Stomach (tissue), 19 donors: ENCODE measurements at regions of chr2 and their contacts with region 1.

Region 1: GRCh38 chr2:45484965-45485364 is 126.1 kb downstream of the SRBD1 start:
- DNase-seq: no peak
- H3K4me3 ChIP-seq: no peak overlapping the region
- H3K27ac ChIP-seq: no peak overlapping the region
- H3K4me1 ChIP-seq: no peaks in the 10 kb centered on the region
- H3K27me3 ChIP-seq: no peaks in the 10 kb centered on the region
- CTCF ChIP-seq: no peak
- EP300 ChIP-seq: no peak
- POLR2A ChIP-seq: no peak

Region 2: DNA sequence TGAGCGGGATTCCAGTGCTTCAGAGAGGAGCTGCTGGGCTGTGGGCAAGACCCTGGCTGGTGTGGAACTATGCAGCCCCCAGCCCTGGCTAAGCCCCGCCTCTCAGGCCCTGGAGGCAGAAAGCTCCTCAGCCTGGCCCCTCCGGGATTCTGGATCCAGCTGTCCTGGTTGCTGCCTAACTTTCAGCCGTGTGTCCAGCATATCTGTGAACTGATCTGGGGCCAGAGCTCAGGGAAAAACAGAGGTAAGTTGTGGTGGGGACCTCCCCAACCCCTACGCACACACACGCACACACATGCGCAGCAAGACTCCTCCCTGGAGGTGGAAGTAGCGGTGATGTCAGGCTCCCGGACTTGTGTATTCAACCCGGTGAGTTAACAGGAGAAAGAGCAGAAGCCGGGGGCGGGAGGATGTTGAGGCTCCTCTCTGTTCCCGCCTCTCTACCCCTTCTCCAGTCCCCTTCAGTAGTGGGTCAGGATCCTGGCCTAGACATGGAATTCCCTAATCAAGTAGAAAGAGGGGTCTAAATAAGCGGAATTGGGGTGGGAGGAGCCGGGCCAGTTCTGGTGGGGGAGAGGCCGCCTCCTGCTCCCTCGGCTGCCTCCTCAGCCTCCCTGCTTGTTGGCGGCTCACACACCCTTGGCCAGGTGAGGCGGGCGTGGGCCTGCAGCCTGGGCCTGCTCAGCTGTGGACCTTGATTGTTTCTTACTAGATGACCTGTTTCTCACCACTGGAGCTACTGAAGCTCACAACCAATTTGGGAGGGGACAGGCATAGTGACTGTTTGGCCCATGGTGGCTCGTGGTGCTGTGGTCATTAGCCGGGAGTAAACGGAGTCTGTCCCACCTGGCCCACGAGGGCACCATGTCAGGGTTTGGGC is 509.2 kb before region 1 on chr2:
- intact Hi-C with region 1: loop called (anchors 5 kb)
- DNase-seq: peak in 1 of 2 donors; percentile 53
- H3K4me3 ChIP-seq: no peak overlapping the region
- H3K27ac ChIP-seq: no peak overlapping the region
- H3K4me1 ChIP-seq: peaks cover 0 to 6% (median 0%) of the 10 kb centered on the region in 4 donors
- H3K27me3 ChIP-seq: peaks cover 3 to 74% (median 6%) of the 10 kb centered on the region in 3 donors
- CTCF ChIP-seq: no peak
- EP300 ChIP-seq: no peak
- POLR2A ChIP-seq: no peak

Region 3: DNA sequence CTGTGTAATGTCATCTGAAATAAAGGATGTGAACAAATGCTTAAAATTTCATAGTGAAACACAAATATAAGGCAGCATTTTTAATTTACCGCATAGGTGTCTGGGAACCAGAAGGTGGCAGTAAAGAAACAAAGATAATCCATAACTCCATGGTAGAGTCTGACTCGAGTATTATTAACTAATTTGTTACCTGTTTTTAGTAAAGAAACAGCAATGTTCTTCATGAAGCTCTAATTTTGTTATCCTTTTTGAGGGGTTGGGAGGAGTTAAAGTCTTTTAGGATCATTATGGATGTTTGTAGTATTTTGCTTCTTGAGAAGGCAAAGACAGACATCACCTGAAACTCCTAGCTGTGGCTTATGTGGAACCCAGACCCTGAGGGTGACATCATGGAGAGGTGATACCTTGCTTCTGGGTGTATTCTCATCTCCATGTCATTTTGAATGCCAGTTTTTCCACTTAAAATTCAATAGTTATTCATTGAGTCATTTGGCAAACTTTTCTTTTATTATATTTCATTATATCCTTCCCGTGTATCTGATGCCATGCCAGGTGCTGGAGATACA is 526.0 kb after region 1 on chr2:
- intact Hi-C with region 1: no loop called
- DNase-seq: peak in 1 of 2 donors; percentile 69
- H3K4me3 ChIP-seq: no peak overlapping the region
- H3K27ac ChIP-seq: peak overlapping the region in 2 of 5 donors; percentile 21 to 56
- H3K4me1 ChIP-seq: peaks cover 0 to 14% (median 6%) of the 10 kb centered on the region in 4 donors
- H3K27me3 ChIP-seq: no peaks in the 10 kb centered on the region
- CTCF ChIP-seq: peak in 5 of 7 experiments; percentile 37 to 79 (median 64)
- EP300 ChIP-seq: no peak
- POLR2A ChIP-seq: no peak

Region 4: GRCh38 chr2:46135958-46136357 is 651.0 kb after region 1 on chr2:
- intact Hi-C with region 1: no loop called
- DNase-seq: peak in 1 of 2 donors; percentile 52
- H3K4me3 ChIP-seq: no peak overlapping the region
- H3K27ac ChIP-seq: peak overlapping the region in 3 of 5 donors; percentile 11 to 22 (median 15)
- H3K4me1 ChIP-seq: peaks cover 0 to 35% (median 20%) of the 10 kb centered on the region in 4 donors
- H3K27me3 ChIP-seq: no peaks in the 10 kb centered on the region
- CTCF ChIP-seq: no peak
- EP300 ChIP-seq: no peak
- POLR2A ChIP-seq: no peak